Transverse colon (tissue), 4 donors: ENCODE measurements at regions of chr4 and their contacts with region 1.

Region 1: GRCh38 chr4:83850435-83850834 is 314.5 kb downstream of the GPAT3 start:
- DNase-seq: no peak
- H3K4me3 ChIP-seq: no peak overlapping the region
- H3K27ac ChIP-seq: no peak overlapping the region
- H3K4me1 ChIP-seq: no peaks in the 10 kb centered on the region
- H3K27me3 ChIP-seq: no peaks in the 10 kb centered on the region
- CTCF ChIP-seq: no peak
- EP300 ChIP-seq: no peak
- POLR2A ChIP-seq: no peak

Region 2: DNA sequence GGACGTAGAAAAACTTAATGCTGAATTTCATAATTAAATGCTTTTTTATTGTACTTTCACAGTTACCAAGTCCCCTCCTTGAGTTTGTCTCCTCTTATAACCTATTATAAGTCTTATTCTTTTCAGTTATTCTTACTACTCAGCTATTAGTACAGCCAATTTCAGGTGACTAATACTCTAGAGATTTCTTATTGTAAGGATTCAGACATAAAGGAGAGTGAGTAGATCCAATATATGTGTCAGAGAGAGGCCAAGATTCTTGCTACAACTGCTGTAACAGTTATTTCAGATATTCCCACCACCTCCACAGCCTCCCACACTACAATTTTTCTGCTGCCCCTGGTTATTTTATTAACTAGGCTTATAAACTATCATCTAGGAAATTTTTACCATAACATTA is 40.0 kb before region 1 on chr4:
- in situ Hi-C with region 1: no loop called
- intact Hi-C with region 1: loop called (anchors 2 kb)
- DNase-seq: no peak
- H3K4me3 ChIP-seq: no peak overlapping the region
- H3K27ac ChIP-seq: no peak overlapping the region
- H3K4me1 ChIP-seq: no peaks in the 10 kb centered on the region
- H3K27me3 ChIP-seq: no peaks in the 10 kb centered on the region
- CTCF ChIP-seq: no peak
- EP300 ChIP-seq: no peak
- POLR2A ChIP-seq: no peak